Ovary (tissue), 10 donors: ENCODE measurements at regions of chr21 and their contacts with region 1.

Region 1: DNA sequence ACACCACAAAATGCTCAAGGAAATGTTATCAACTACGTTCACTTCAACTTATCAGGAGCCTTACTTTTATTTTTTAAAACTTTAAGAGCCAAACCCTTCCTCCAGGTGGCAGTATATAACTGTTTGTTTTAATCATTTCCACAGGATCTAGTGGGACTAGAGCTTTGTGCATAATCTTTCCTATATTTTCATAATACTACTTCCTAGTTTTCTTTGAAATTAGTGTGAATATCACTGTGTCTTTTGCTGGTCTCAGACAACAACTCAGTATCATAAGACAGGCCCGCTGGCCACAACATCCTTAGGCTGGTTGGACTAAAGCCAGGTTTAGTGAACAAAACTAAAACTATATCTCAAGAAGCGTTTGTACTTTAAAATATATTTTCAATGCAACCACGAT is 145.5 kb downstream of the TIAM1 start:
- DNase-seq: no peak
- H3K4me3 ChIP-seq: no peak overlapping the region
- H3K27ac ChIP-seq: no peak overlapping the region
- H3K4me1 ChIP-seq: no peaks in the 10 kb centered on the region
- H3K27me3 ChIP-seq: no peaks in the 10 kb centered on the region
- CTCF ChIP-seq: peak in 1 of 3 donors; percentile 15
- EP300 ChIP-seq: no peak
- POLR2A ChIP-seq: no peak

Region 2: DNA sequence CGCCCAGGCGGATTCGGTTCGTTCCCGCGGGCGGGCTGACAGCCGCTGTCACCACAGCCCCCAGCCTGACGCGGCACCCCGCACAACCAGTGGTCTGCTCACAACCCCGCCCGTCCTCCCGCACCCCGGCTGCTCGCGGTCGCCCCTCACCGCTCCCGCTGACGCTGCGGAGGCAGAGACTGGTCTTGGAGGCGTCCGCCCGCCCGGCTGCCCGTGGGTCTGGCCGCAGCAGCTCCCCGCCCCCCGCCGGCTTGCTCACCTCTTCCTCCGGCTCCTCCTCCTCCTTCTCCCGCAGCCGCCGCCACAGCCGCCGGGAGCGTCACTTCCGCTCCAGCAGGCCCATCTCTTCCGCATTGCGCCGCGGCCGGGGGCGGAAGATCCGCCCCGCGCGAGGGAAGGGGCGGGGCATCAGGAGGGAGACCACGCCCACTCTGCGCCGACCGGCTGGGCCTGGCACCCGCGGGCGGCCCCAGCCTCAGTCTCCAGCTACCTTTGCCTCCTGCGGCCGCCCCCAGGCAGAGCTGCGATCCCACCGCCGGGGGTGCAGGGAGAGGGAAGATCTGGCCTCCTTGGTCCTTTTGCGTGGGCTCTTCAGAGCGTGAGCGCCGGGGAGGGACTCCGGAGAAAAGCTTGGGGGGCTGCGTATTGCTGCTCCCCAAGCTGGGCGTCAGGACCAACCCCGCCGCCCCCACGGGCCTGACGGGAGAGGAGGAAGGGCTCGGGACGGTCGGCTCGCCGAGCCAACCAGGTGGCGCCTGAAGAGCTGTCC is 1529.3 kb after region 1 on chr21 and contains the start of gene SYNJ1:
- intact Hi-C with region 1: loop called in 1 of 4 experiments (anchors 5 kb)
- DNase-seq: peak; percentile 93 to 97 (median 95)
- H3K4me3 ChIP-seq: peak within 1 kb of the TSS; percentile 99
- H3K27ac ChIP-seq: peak within 1 kb of the TSS; percentile 14 to 79
- H3K4me1 ChIP-seq: peaks cover 8% of the 10 kb centered on the region
- H3K27me3 ChIP-seq: no peaks in the 10 kb centered on the region
- CTCF ChIP-seq: no peak
- EP300 ChIP-seq: no peak
- POLR2A ChIP-seq: peak; percentile 66
- total RNA-seq, gene SYNJ1: 7.0 to 15.6 (median 11.1) TPM